ENCODE measurements at regions of chr20 and their contacts with region 1.

Region 1: GRCh38 chr20:58236612-58237330 is 8.3 kb upstream of the ANKRD60 start:
- DNase-seq: peak; percentile 53 to 96 (median 83)

Region 2: DNA sequence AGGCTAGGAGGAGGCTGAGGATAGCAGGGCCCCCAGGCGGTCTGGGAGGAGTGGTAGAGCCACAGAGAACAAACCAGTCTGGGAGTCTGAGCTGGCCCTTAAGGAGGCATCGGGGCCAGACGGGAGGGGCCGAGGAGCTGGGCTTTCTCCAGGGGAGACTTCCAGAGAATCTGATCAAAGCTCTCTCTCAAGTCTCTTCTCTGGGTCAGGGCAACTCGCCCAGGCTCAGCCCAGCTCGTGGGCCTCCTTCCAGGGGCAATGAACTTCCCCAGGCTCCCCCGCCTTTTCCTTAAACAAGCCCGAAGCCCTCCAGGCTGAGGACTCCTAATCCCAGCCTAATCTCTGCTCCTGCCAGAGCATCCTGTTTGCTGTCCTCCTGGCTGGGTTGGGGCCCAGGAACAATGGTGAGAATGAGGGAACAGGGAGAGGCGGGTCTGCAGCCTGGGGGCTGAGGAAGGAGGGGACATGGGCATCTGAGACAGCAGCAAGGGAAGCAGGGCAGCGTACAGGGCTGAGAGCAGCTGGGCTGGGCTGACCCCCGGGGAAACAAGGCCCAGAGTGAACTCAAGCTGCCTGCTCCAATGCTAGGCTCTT is 181.9 kb before region 1 on chr20:
- intact Hi-C with region 1: no loop called
- DNase-seq: peak in 8 of 10 donors; percentile 31 to 87 (median 49)

Region 3: GRCh38 chr20:58293453-58293852 is 56.7 kb after region 1 on chr20:
- intact Hi-C with region 1: loop called (anchors 2 kb)
- DNase-seq: peak in 2 of 10 donors; percentile 23 to 42

Region 4: GRCh38 chr20:58447511-58448391 is 211.0 kb after region 1 on chr20:
- intact Hi-C with region 1: loop called (anchors 2 kb)
- DNase-seq: peak in 3 of 10 donors; percentile 10 to 42 (median 19)

Region 5: DNA sequence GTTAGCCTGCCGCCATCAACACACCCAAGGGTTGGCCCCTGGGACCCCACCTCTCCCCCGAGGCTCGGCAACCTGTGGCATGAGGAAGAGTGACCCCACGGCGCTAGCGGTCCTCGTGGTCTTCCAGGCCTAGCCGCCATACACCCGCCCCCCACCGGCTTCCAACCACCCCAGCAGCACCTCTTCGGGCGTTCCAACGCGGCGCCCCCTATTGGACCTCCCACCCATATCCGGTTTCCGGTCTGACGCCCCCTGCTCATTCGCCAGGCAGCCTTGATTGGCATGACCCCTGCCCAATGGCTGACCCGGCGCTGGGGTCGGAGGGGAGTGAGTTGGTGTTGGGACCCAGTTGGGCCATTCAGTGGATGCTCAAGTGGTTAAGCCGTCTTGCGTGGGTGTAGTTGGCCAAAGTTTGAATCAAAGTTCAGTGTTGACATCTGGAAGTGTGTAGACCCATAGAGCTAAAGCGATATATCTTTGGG is 614.0 kb after region 1 on chr20 and contains the start of gene GNAS-AS1:
- intact Hi-C with region 1: loop called (anchors 5 kb)
- DNase-seq: peak; percentile 40 to 94 (median 72)